HepG2 (cell line): ENCODE measurements at regions of chr17 and their contacts with region 1.

Region 1: DNA sequence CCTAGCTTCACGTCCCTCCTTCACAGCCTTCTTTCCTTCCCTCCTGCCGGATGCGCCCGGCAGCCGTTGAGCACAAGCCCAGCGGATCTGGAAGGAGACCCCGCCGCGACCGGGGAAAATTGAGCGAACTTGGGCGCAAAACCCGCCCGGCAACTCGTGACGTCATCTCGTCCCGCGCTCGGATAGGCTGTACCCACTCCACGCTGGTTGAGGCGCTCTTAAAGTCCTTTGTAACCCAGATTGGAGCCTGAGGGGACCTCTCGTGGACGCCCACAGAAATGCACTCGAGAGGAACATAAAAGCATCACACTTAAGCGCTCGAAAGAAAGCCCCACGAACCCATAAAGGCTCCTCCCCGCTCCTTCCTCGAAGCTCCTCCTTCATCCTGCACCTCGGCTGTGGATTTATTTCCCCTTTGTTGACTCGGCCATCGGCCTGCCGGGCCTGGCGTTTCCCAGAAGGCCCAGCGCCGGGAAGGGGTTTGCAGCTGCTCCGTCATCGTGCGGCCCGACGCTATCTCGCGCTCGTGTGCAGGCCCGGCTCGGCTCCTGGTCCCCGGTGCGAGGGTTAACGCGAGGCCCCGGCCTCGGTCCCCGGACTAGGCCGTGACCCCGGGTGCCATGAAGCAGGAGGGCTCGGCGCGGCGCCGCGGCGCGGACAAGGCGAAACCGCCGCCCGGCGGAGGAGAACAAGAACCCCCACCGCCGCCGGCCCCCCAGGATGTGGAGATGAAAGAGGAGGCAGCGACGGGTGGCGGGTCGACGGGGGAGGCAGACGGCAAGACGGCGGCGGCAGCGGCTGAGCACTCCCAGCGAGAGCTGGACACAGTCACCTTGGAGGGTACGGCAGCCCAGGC is at the start of gene PSMD3:
- DNase-seq: peak; percentile 100
- ATAC-seq: peak; percentile 92
- H3K4me3 ChIP-seq: peak within 1 kb of the TSS; percentile 92 to 96 (median 94)
- H3K27ac ChIP-seq: peak within 1 kb of the TSS; percentile 82
- H3K4me1 ChIP-seq: peaks cover 25% of the 10 kb centered on the region
- H3K27me3 ChIP-seq: peaks cover 6 to 28% of the 10 kb centered on the region in 2 experiments
- CTCF ChIP-seq: peak; percentile 96
- EP300 ChIP-seq: peak; percentile 61 to 70; a peak in 2 of 4 replicates
- POLR2A ChIP-seq: peak; percentile 86 to 92
- RAD21 ChIP-seq: peak; percentile 97
- total RNA-seq, gene PSMD3: 114 and 146 TPM in 2 replicates

Region 2: DNA sequence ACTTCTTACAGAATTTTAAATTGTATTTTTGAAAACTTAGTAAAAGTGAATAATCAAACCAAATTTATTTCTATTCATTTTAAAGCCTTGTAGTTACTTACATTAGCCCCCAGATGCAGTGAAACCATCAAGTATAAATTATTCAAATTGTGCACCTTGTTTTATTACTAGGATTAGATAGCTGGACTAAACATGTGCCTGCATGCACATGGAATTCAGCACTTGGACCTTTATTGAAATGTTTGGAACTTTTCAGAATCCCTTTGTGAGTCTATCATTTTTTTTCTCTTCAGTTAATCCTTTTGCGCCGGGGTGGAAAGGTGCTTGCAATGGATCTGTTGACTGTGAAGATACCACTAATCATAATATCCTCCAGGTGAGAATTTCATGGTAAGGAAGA is 107.8 kb before region 1 on chr17:
- CTCF ChIA-PET with region 1: interaction called, 14 read pairs
- POLR2A ChIA-PET with region 1: no interaction called
- in situ Hi-C with region 1: loop called (anchors 5 kb)
- intact Hi-C with region 1: loop called (anchors 1 kb)
- DNase-seq: peak; percentile 20
- ATAC-seq: no peak
- H3K4me3 ChIP-seq: no peak overlapping the region
- H3K27ac ChIP-seq: no peak overlapping the region
- H3K4me1 ChIP-seq: no peaks in the 10 kb centered on the region
- H3K27me3 ChIP-seq: peaks cover 0 to 16% of the 10 kb centered on the region in 2 experiments; a peak in 3 of 5 replicates
- CTCF ChIP-seq: peak; percentile 43
- EP300 ChIP-seq: no peak
- POLR2A ChIP-seq: no peak
- RAD21 ChIP-seq: no peak

Region 3: DNA sequence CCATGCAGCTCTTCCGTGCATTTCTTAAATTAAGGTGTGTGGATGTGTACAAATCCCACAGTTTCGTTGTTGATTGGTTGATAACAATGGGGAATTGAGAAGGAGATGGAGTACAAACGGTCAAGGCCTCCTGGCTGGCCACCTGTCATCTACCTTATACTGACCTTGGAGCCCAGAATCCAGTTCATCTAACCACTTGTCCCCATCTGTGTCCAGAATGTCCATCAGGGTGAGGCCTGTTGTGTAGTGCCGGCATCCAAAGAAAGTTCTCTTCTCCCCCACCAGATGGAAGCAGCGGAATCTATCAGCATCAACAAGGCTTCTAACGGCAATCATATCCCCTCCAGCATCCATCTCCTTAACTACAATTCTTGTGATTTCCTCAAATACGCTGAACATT is 63.7 kb before region 1 on chr17:
- CTCF ChIA-PET with region 1: no interaction called
- POLR2A ChIA-PET with region 1: interaction called, 3 read pairs
- in situ Hi-C with region 1: no loop called
- intact Hi-C with region 1: loop called (anchors 1 kb)
- DNase-seq: peak; percentile 77
- ATAC-seq: peak; percentile 81
- H3K4me3 ChIP-seq: no peak overlapping the region; a peak in 1 of 6 replicates
- H3K27ac ChIP-seq: peak overlapping the region; percentile 30
- H3K4me1 ChIP-seq: peaks cover 82% of the 10 kb centered on the region
- H3K27me3 ChIP-seq: no peaks in the 10 kb centered on the region
- CTCF ChIP-seq: peak; percentile 87
- EP300 ChIP-seq: no peak
- POLR2A ChIP-seq: no peak
- RAD21 ChIP-seq: peak; percentile 64; the same call in 1 of the 2 replicates

Region 4: GRCh38 chr17:39952680-39953470 is 27.7 kb before region 1 on chr17:
- CTCF ChIA-PET with region 1: interaction called, 25 read pairs
- POLR2A ChIA-PET with region 1: interaction called, 21 read pairs
- in situ Hi-C with region 1: no loop called
- intact Hi-C with region 1: no loop called
- DNase-seq: peak; percentile 94
- ATAC-seq: peak; percentile 92
- H3K4me3 ChIP-seq: peak overlapping the region; percentile 48 to 79 (median 51)
- H3K27ac ChIP-seq: no peak overlapping the region
- H3K4me1 ChIP-seq: peaks cover 64% of the 10 kb centered on the region
- H3K27me3 ChIP-seq: peaks cover under 1 to 11% of the 10 kb centered on the region in 2 experiments; a peak in 3 of 5 replicates
- CTCF ChIP-seq: no peak
- EP300 ChIP-seq: no peak
- POLR2A ChIP-seq: peak in 1 of 2 experiments; percentile 77; a peak in 2 of 4 replicates
- RAD21 ChIP-seq: no peak

Region 5: GRCh38 chr17:39963829-39964228 is 16.8 kb before region 1 on chr17:
- CTCF ChIA-PET with region 1: interaction called, 25 read pairs
- POLR2A ChIA-PET with region 1: interaction called, 9 read pairs
- in situ Hi-C with region 1: no loop called
- intact Hi-C with region 1: loop called (anchors 1 kb)
- DNase-seq: no peak
- ATAC-seq: no peak
- H3K4me3 ChIP-seq: no peak overlapping the region
- H3K27ac ChIP-seq: no peak overlapping the region
- H3K4me1 ChIP-seq: peaks cover 25% of the 10 kb centered on the region
- H3K27me3 ChIP-seq: peaks cover 0 to 47% of the 10 kb centered on the region in 2 experiments; a peak in 3 of 5 replicates
- CTCF ChIP-seq: no peak
- EP300 ChIP-seq: no peak
- POLR2A ChIP-seq: no peak
- RAD21 ChIP-seq: no peak

Region 6: DNA sequence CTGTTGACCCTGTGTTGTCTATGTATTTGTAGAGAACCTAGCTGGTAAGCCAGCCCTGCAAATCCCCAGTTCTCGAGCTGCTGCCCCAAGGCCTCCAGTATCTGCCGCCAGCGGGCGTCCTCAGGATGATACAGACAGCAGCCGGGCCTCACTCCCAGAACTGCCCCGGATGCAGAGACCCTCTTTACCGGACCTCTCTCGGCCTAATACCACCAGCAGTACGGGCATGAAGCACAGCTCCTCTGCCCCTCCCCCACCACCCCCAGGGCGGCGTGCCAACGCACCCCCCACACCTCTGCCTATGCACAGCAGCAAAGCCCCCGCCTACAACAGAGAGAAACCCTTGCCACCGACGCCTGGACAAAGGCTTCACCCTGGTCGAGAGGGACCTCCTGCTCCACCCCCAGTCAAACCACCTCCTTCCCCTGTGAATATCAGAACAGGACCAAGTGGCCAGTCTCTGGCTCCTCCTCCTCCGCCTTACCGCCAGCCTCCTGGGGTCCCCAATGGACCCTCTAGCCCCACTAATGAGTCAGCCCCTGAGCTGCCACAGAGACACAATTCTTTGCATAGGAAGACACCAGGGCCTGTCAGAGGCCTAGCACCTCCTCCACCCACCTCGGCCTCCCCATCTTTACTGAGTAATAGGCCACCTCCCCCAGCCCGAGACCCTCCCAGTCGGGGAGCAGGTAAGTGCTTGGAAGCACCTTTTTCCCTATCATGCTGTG is 284.0 kb after region 1 on chr17:
- CTCF ChIA-PET with region 1: no interaction called
- POLR2A ChIA-PET with region 1: no interaction called
- in situ Hi-C with region 1: no loop called
- intact Hi-C with region 1: no loop called
- DNase-seq: no peak
- ATAC-seq: no peak
- H3K4me3 ChIP-seq: no peak overlapping the region
- H3K27ac ChIP-seq: no peak overlapping the region
- H3K4me1 ChIP-seq: peaks cover 15% of the 10 kb centered on the region
- H3K27me3 ChIP-seq: no peaks in the 10 kb centered on the region
- CTCF ChIP-seq: no peak
- EP300 ChIP-seq: no peak
- POLR2A ChIP-seq: no peak
- RAD21 ChIP-seq: no peak

Region 7: GRCh38 chr17:40301315-40301714 is 320.7 kb after region 1 on chr17:
- CTCF ChIA-PET with region 1: no interaction called
- POLR2A ChIA-PET with region 1: no interaction called
- in situ Hi-C with region 1: no loop called
- intact Hi-C with region 1: no loop called
- DNase-seq: no peak
- ATAC-seq: peak; percentile 19; the same call in 1 of the 3 replicates
- H3K4me3 ChIP-seq: no peak overlapping the region
- H3K27ac ChIP-seq: no peak overlapping the region
- H3K4me1 ChIP-seq: peaks cover 3% of the 10 kb centered on the region
- H3K27me3 ChIP-seq: no peaks in the 10 kb centered on the region
- CTCF ChIP-seq: peak; percentile 59
- EP300 ChIP-seq: no peak
- POLR2A ChIP-seq: no peak
- RAD21 ChIP-seq: no peak